ENCODE measurements at regions of chr2 and their contacts with region 1.

Region 1: GRCh38 chr2:161273038-161273760 is 35.0 kb upstream of the PSMD14 start:
- DNase-seq: no peak
- ATAC-seq: peak in 1 of 2 donors; percentile 46
- H3K4me3 ChIP-seq: no peak overlapping the region
- H3K27ac ChIP-seq: no peak overlapping the region
- H3K4me1 ChIP-seq: peaks cover 0 to 6% of the 10 kb centered on the region in 2 donors
- H3K27me3 ChIP-seq: no peaks in the 10 kb centered on the region
- CTCF ChIP-seq: peak; percentile 63 to 83 (median 68)
- POLR2A ChIP-seq: no peak

Region 2: GRCh38 chr2:161223139-161223732 is 50.0 kb before region 1 on chr2:
- in situ Hi-C with region 1: loop called in 3 of 4 experiments (anchors 10 kb)
- intact Hi-C with region 1: loop called (anchors 1 kb)
- DNase-seq: no peak
- ATAC-seq: peak in 1 of 2 donors; percentile 33
- H3K4me3 ChIP-seq: no peak overlapping the region
- H3K27ac ChIP-seq: no peak overlapping the region
- H3K4me1 ChIP-seq: no peaks in the 10 kb centered on the region
- H3K27me3 ChIP-seq: no peaks in the 10 kb centered on the region
- CTCF ChIP-seq: peak; percentile 62 to 74 (median 71)
- POLR2A ChIP-seq: no peak

Region 3: DNA sequence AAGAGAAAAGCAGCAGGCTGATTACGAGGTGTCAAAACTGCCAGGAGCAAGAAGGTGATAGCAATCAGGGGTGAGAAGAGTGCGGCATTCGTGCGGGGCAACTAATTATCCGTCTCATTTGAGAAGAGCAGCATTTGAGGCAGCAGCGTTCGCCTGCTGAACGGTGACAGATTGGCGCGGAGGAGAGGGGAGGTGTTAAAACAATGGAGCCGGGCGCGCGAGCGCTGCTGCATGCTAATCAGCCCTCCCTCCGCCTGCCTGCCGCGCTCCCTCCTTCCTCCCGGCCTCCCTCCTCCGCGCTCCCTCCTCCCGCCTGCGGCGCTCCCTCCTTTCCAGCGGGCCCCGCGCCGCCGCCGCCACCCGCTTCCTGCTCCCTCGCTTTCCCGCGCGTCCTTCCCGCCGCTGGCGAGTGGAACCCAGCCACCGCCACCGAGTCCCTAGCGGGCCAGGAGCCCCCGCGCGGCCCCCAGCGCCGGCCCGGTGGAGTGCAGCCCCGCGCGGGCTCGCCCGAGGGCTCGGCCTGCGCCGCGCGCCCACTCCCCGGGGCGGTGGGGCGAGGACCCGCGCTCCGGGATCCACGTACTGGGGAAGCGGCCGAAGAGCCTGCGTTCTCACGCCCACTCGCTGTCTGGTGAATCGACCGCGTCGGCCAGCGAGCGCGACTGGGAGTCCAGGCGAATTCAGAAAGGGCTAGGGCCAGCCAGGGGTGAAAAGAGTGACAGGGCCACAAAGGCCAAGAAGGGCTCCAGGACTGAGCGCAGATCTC is 34.5 kb before region 1 on chr2:
- in situ Hi-C with region 1: no loop called
- intact Hi-C with region 1: no loop called
- DNase-seq: peak; percentile 21 to 32
- ATAC-seq: peak; percentile 43 to 70
- H3K4me3 ChIP-seq: peak overlapping the region; percentile 48 to 86 (median 63)
- H3K27ac ChIP-seq: peak overlapping the region in 1 of 4 donors; percentile 45
- H3K4me1 ChIP-seq: peaks cover 4 to 12% of the 10 kb centered on the region in 2 donors
- H3K27me3 ChIP-seq: no peaks in the 10 kb centered on the region
- CTCF ChIP-seq: no peak
- POLR2A ChIP-seq: no peak

Region 4: GRCh38 chr2:161250864-161251436 is 22.2 kb before region 1 on chr2:
- in situ Hi-C with region 1: no loop called
- intact Hi-C with region 1: loop called (anchors 2 kb)
- DNase-seq: no peak
- ATAC-seq: peak; percentile 53 to 56
- H3K4me3 ChIP-seq: no peak overlapping the region
- H3K27ac ChIP-seq: no peak overlapping the region
- H3K4me1 ChIP-seq: no peaks in the 10 kb centered on the region
- H3K27me3 ChIP-seq: no peaks in the 10 kb centered on the region
- CTCF ChIP-seq: peak in 4 of 5 experiments; percentile 36 to 62 (median 45)
- POLR2A ChIP-seq: no peak

Region 5: DNA sequence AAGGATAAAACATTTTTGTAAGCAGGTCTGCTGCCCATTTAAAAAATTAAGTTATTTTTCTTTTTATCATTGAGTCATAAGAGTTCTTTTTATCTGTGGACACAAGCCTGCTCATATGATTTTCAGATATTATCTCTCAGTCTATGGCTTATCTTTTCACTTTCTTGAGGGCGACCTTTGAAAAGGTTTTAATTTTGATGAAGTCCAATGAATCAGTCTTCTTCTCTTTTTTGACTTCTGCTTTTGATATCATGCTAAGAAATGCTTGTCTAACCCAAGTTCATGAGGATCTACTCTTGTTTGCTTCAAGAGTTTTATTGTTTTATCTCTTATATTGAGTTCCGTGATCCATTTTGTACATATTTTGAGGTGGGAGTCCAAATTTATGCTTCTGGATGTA is 71.5 kb after region 1 on chr2:
- in situ Hi-C with region 1: no loop called
- intact Hi-C with region 1: no loop called
- DNase-seq: no peak
- ATAC-seq: no peak
- H3K4me3 ChIP-seq: no peak overlapping the region
- H3K27ac ChIP-seq: no peak overlapping the region
- H3K4me1 ChIP-seq: peaks cover 13 to 15% of the 10 kb centered on the region in 2 donors
- H3K27me3 ChIP-seq: no peaks in the 10 kb centered on the region
- CTCF ChIP-seq: no peak
- POLR2A ChIP-seq: no peak

Region 6: GRCh38 chr2:161604901-161605300 is 331.7 kb after region 1 on chr2:
- in situ Hi-C with region 1: no loop called
- intact Hi-C with region 1: no loop called
- DNase-seq: no peak
- ATAC-seq: no peak
- H3K4me3 ChIP-seq: no peak overlapping the region
- H3K27ac ChIP-seq: no peak overlapping the region
- H3K4me1 ChIP-seq: no peaks in the 10 kb centered on the region
- H3K27me3 ChIP-seq: no peaks in the 10 kb centered on the region
- CTCF ChIP-seq: no peak
- POLR2A ChIP-seq: no peak

Measured in gastrocnemius medialis (tissue), 4 donors.